Common myeloid progenitor, CD34-positive (primary cell): ENCODE measurements at regions of chr16 and their contacts with region 1.

Region 1: GRCh38 chr16:88957887-88958577 is 19.0 kb downstream of the CBFA2T3 start:
- DNase-seq: peak; percentile 70 to 89 (median 88)
- H3K4me3 ChIP-seq: peak overlapping the region in 5 of 7 experiments; percentile 37 to 59 (median 41)
- H3K27ac ChIP-seq: no peak overlapping the region
- H3K4me1 ChIP-seq: peaks cover 0 to 49% (median 46%) of the 10 kb centered on the region in 4 experiments
- H3K27me3 ChIP-seq: no peaks in the 10 kb centered on the region

Region 2: DNA sequence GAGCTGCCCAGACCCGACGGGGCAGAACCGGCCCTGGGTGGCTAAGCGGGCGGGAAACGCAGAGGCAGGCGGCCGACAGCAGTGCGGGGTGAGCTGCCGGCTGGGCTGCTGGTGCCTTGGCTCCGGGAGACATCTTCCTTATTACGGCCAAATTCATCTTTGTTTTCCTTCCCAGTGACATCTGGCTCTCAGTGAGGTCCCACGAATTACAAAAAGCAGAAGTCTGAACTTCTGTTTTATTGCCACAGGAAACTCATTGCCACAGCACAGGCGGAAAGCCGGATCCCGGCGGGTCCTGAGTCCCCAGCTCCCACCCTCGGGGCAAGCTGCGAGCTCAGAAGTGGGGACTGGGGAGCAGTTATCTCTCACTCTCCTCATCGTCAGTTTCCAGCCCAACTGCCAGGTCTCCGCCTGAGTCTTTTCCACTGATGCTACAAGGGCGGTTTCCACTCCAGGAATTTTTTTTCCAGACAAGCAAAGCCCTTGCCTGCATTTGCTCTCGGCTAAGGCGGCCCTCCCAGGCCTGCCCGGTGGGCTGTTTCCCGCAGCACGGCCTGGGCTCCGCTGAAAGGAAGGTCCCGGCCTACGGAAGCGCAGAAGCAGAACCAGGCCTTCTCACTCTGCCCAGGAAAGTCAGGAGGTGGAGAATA is 21.4 kb before region 1 on chr16:
- CTCF ChIA-PET with region 1: interaction called, 12 read pairs
- POLR2A ChIA-PET with region 1: interaction called, 4 read pairs
- DNase-seq: peak; percentile 88 to 96 (median 95)
- H3K4me3 ChIP-seq: peak overlapping the region; percentile 17 to 82 (median 56)
- H3K27ac ChIP-seq: peak overlapping the region; percentile 58 to 75
- H3K4me1 ChIP-seq: peaks cover 3 to 68% (median 56%) of the 10 kb centered on the region in 4 experiments
- H3K27me3 ChIP-seq: no peaks in the 10 kb centered on the region

Region 3: DNA sequence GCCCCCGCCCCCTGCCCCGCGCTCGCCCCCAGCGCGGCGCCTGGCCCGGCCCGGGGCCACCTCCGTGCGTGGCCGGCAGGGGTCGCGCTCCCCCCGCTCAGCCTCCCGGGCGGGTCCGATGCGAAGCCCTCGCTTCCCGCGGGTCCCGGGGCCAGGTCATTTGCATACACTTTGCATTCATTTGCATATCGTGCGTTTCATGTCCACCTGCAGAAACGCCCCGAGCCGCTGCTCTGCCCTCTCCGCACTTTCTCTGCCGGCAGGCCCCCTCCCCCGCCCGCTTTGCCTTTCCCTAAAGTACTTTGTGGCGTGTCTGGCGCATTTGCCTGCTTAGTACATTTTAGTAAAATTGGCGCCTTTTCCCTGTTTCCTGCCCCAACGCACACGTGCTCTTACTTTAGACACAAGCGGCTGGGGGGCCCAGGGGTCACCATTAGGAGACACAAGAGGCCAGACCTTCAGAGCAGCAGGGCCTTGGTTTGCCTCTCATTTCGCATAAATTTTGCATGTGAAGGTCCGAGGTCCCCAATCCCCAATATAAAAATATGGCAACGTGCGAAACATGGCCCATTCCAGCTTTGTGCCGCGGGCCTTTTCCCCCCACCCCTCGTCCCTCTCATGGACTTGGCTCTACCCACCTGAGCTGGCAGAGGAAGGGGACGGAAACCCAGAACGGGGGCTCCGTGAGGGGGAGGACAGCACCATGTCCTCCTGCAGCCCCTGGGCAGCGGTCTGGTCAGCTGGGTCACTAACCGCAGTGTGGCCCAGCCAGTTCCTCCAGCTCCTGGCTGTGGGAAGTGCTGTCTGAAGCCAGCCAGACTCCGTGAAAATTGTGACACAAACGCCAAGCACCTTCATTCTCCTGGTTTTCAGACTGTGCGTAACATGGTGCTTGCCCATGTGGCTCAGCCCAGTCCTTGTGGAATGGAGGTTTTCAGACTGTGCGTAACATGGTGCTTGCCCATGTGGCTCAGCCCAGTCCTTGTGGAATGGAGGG is 15.8 kb before region 1 on chr16:
- CTCF ChIA-PET with region 1: interaction called, 12 read pairs
- POLR2A ChIA-PET with region 1: interaction called, 4 read pairs
- DNase-seq: peak; percentile 65 to 81 (median 79)
- H3K4me3 ChIP-seq: peak overlapping the region in 6 of 7 experiments; percentile 23 to 74 (median 47)
- H3K27ac ChIP-seq: no peak overlapping the region
- H3K4me1 ChIP-seq: peaks cover 3 to 70% (median 64%) of the 10 kb centered on the region in 4 experiments
- H3K27me3 ChIP-seq: no peaks in the 10 kb centered on the region